ENCODE measurements at regions of chr12 and their contacts with region 1.

Region 1: GRCh38 chr12:27674989-27675388 is 21.3 kb upstream of the REP15 start:
- DNase-seq: no peak
- ATAC-seq: no peak
- H3K4me3 ChIP-seq: no peak overlapping the region
- H3K27ac ChIP-seq: no peak overlapping the region
- H3K4me1 ChIP-seq: no peaks in the 10 kb centered on the region
- H3K27me3 ChIP-seq: no peaks in the 10 kb centered on the region
- CTCF ChIP-seq: no peak
- POLR2A ChIP-seq: no peak
- RAD21 ChIP-seq: no peak

Region 2: DNA sequence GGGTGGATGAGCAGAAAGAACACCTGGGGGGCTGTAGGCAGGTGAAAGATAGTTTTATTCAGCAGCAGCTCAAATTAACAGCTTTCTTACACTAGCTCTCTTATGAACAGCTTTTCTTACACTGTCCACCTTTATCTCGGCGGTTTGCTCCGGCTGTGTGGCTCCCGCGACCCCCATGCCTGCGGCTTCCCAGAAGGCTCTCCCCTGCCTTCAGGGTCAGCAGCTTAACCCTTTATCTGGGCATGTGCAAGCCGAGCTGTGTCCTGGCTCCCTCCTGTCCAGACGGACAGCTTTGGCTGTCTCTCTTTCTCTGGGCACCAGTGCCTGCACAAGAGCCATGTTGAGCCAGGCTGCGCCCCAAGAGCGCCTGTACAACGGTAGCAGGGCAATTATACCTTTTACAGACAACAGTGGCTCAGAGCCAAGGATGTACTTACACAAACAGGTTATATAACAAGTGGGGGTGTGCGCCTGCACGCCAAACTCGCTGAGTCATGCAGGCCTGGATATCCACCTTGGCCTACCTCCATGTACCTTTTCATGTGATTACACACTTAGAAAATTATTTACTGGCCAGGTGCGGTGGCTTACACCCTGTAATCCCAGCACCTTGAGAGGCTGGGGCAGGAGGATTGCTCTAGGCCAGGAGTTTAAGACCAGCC is 76.5 kb after region 1 on chr12:
- CTCF ChIA-PET with region 1: no interaction called
- POLR2A ChIA-PET with region 1: interaction called, 23 read pairs
- dilution Hi-C with region 1: no loop called
- in situ Hi-C with region 1: no loop called
- intact Hi-C with region 1: no loop called
- DNase-seq: no peak
- ATAC-seq: no peak
- H3K4me3 ChIP-seq: no peak overlapping the region
- H3K27ac ChIP-seq: no peak overlapping the region
- H3K4me1 ChIP-seq: peaks cover 6% of the 10 kb centered on the region
- H3K27me3 ChIP-seq: no peaks in the 10 kb centered on the region
- CTCF ChIP-seq: no peak
- POLR2A ChIP-seq: no peak
- RAD21 ChIP-seq: no peak

Measured in IMR-90 (cell line).